Activated naive CD4-positive, alpha-beta T cell treated with anti-CD3 and anti-CD28 coated beads for 36 hours (primary cell): ENCODE measurements at regions of chr14 and their contacts with region 1.

Region 1: DNA sequence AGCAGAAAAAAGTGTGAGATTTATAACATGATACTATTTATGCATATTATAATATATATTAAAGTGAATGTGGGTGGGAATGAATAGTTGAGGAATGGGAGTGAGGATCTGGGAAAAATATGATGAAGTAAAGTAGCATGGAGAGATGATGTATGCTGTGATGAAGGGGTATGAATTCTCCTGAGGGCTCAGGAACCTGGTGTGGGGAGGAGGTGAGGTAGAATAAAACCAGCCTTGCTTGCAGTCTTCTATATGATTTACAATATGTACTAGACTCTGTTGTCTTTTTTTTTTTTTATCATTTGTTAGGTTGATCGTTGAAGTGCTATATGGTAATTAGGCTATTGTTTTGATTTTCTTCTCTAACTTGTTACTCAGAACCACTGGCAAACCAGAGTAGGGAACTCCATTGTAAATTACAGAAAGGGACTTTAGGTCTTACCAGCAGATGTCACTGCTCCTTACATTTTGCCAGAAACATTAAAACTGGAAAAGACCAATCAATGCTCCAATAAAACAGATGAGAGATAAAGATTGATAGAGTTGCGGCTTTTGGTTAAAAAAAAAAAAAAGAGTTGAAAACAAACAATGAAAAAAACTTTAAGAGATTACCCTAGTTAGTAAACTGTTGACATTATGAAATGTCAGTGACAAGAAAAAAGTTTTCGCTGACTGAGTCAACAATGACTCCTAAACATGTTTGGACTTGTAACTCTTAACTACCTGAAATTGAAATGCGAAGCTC is 39.9 kb downstream of the ATL1 start:
- DNase-seq: no peak
- H3K4me3 Mint-ChIP-seq: no peak overlapping the region
- H3K27ac Mint-ChIP-seq: no peak overlapping the region
- H3K4me1 Mint-ChIP-seq: no peaks in the 10 kb centered on the region
- H3K27me3 Mint-ChIP-seq: no peaks in the 10 kb centered on the region

Region 2: GRCh38 chr14:50714450-50715073 is 114.7 kb after region 1 on chr14:
- CTCF ChIA-PET with region 1: interaction called, 3 read pairs
- intact Hi-C with region 1: loop called (anchors 5 kb)
- DNase-seq: peak; percentile 30
- H3K4me3 Mint-ChIP-seq: no peak overlapping the region
- H3K27ac Mint-ChIP-seq: no peak overlapping the region
- H3K4me1 Mint-ChIP-seq: no peaks in the 10 kb centered on the region
- H3K27me3 Mint-ChIP-seq: peaks cover 3% of the 10 kb centered on the region